GM12878 (cell line): ENCODE measurements at regions of chr6 and their contacts with region 1.

Region 1: GRCh38 chr6:115891111-115891669 is 169.5 kb downstream of the FRK start:
- DNase-seq: peak; percentile 70
- ATAC-seq: peak; percentile 93
- H3K4me3 ChIP-seq: no peak overlapping the region
- H3K27ac ChIP-seq: peak overlapping the region; percentile 58
- H3K4me1 ChIP-seq: peaks cover 26% of the 10 kb centered on the region
- H3K27me3 ChIP-seq: no peaks in the 10 kb centered on the region
- CTCF ChIP-seq: no peak
- EP300 ChIP-seq: peak in 1 of 2 experiments; percentile 92; a peak in 3 of 4 replicates
- POLR2A ChIP-seq: no peak
- RAD21 ChIP-seq: no peak

Region 2: GRCh38 chr6:115677198-115677597 is 214.0 kb before region 1 on chr6:
- CTCF ChIA-PET with region 1: no interaction called
- POLR2A ChIA-PET with region 1: no interaction called
- RAD21 ChIA-PET with region 1: no interaction called
- SMC1A ChIA-PET with region 1: no interaction called
- in situ Hi-C with region 1: no loop called
- intact Hi-C with region 1: no loop called
- DNase-seq: no peak
- ATAC-seq: no peak
- H3K4me3 ChIP-seq: no peak overlapping the region
- H3K27ac ChIP-seq: no peak overlapping the region
- H3K4me1 ChIP-seq: no peaks in the 10 kb centered on the region
- H3K27me3 ChIP-seq: no peaks in the 10 kb centered on the region; a peak in 2 of 4 replicates
- CTCF ChIP-seq: no peak
- EP300 ChIP-seq: no peak
- POLR2A ChIP-seq: no peak
- RAD21 ChIP-seq: no peak

Region 3: DNA sequence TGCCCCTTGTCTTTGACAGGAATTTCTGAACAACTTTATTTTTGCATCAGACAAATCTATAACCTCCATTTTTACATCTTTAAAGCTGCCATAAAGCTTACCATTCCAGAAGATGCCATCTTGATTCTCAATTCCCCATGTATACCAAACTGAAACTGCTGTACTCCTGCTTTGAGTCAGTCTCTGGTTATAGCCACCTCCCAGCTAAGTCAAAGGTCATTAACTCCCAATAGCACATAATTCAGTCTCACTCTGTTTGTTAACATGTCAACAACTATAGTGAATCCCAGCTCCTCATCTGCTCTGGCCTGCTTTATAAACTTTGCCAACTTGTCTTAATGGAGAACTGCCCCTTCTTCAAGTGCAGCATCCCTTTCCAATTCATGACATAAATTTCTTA is 174.1 kb before region 1 on chr6:
- CTCF ChIA-PET with region 1: no interaction called
- POLR2A ChIA-PET with region 1: no interaction called
- RAD21 ChIA-PET with region 1: no interaction called
- SMC1A ChIA-PET with region 1: interaction called, 3 read pairs
- in situ Hi-C with region 1: no loop called
- intact Hi-C with region 1: loop called (anchors 1 kb)
- DNase-seq: peak; percentile 31
- ATAC-seq: peak; percentile 95
- H3K4me3 ChIP-seq: no peak overlapping the region
- H3K27ac ChIP-seq: 0 out of 2 replicates have a peak overlapping the region, but pooled peaks have one; percentile 28
- H3K4me1 ChIP-seq: 0 out of 2 replicates have a peak, but pooled peaks cover 3% of the 10 kb centered on the region
- H3K27me3 ChIP-seq: no peaks in the 10 kb centered on the region
- CTCF ChIP-seq: no peak
- EP300 ChIP-seq: peak; percentile 44 to 78; a peak in 2 of 4 replicates
- POLR2A ChIP-seq: no peak
- RAD21 ChIP-seq: no peak

Region 4: GRCh38 chr6:115783402-115784061 is 107.7 kb before region 1 on chr6:
- CTCF ChIA-PET with region 1: no interaction called
- POLR2A ChIA-PET with region 1: no interaction called
- RAD21 ChIA-PET with region 1: no interaction called
- SMC1A ChIA-PET with region 1: no interaction called
- in situ Hi-C with region 1: no loop called
- intact Hi-C with region 1: loop called (anchors 5 kb)
- DNase-seq: no peak
- ATAC-seq: no peak
- H3K4me3 ChIP-seq: no peak overlapping the region
- H3K27ac ChIP-seq: no peak overlapping the region
- H3K4me1 ChIP-seq: no peaks in the 10 kb centered on the region
- H3K27me3 ChIP-seq: no peaks in the 10 kb centered on the region
- CTCF ChIP-seq: no peak
- EP300 ChIP-seq: no peak
- POLR2A ChIP-seq: no peak
- RAD21 ChIP-seq: no peak

Region 5: GRCh38 chr6:115838763-115839401 is 52.3 kb before region 1 on chr6:
- CTCF ChIA-PET with region 1: interaction called, 4 read pairs
- POLR2A ChIA-PET with region 1: no interaction called
- RAD21 ChIA-PET with region 1: no interaction called
- SMC1A ChIA-PET with region 1: interaction called, 3 read pairs
- in situ Hi-C with region 1: no loop called
- intact Hi-C with region 1: loop called (anchors 2 kb)
- DNase-seq: no peak
- ATAC-seq: peak; percentile 82
- H3K4me3 ChIP-seq: no peak overlapping the region
- H3K27ac ChIP-seq: no peak overlapping the region
- H3K4me1 ChIP-seq: no peaks in the 10 kb centered on the region
- H3K27me3 ChIP-seq: no peaks in the 10 kb centered on the region
- CTCF ChIP-seq: peak; percentile 43 to 62 (median 61)
- EP300 ChIP-seq: no peak
- POLR2A ChIP-seq: no peak
- RAD21 ChIP-seq: peak; percentile 25; the same call in 1 of the 2 replicates

Region 6: GRCh38 chr6:117306227-117306785 is 1415.1 kb after region 1 on chr6:
- CTCF ChIA-PET with region 1: no interaction called
- POLR2A ChIA-PET with region 1: no interaction called
- RAD21 ChIA-PET with region 1: no interaction called
- SMC1A ChIA-PET with region 1: no interaction called
- in situ Hi-C with region 1: no loop called
- intact Hi-C with region 1: no loop called
- DNase-seq: no peak
- ATAC-seq: no peak
- H3K4me3 ChIP-seq: no peak overlapping the region
- H3K27ac ChIP-seq: no peak overlapping the region
- H3K4me1 ChIP-seq: no peaks in the 10 kb centered on the region
- H3K27me3 ChIP-seq: no peaks in the 10 kb centered on the region
- CTCF ChIP-seq: no peak
- EP300 ChIP-seq: no peak
- POLR2A ChIP-seq: no peak
- RAD21 ChIP-seq: no peak